HEK293 (cell line): ENCODE measurements at regions of chr19 and their contacts with region 1.

Region 1: GRCh38 chr19:38374429-38375176 is at the start of gene PSMD8:
- H3K4me3 ChIP-seq: peak within 1 kb of the TSS; percentile 70
- H3K27ac ChIP-seq: peak within 1 kb of the TSS; percentile 93
- H3K4me1 ChIP-seq: peaks cover 20% of the 10 kb centered on the region
- CTCF ChIP-seq: peak; percentile 97

Region 2: GRCh38 chr19:38122402-38123093 is 252.1 kb before region 1 on chr19:
- CTCF ChIA-PET with region 1: no interaction called
- POLR2A ChIA-PET with region 1: no interaction called
- H3K4me3 ChIP-seq: no peak overlapping the region
- H3K27ac ChIP-seq: no peak overlapping the region
- H3K4me1 ChIP-seq: no peaks in the 10 kb centered on the region
- CTCF ChIP-seq: no peak

Region 3: DNA sequence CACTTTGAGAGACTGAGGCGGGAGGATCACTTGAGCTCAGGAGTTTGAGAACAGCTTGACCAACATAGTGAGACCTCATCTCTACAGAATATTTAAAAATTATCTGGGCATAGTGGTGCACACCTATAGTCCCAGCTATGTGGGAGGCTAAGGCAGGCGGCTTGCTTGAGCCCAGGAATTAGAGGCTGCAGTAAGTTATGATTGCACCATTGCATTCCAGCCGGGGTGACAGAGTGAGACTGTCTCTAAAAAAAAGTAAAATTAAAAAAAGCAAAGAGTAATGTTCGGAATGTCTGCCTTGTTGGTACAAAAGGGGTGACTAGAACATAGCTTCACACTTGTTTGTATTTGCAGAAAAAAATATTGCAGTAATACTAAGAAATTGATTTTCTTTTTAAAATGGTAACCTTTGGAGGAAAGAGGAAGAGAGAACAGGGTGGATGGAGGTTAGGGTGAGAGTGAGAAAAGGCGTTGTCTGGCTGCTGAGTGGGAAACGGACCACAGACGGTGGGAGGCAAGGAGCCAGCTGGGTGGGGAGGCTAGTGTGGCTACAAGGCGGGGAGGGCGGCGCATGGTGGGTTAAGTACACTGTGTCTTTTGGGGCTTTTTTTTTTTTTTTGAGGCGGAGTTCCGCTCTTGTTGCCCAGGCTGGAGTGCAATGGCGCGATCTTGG is 128.6 kb before region 1 on chr19:
- CTCF ChIA-PET with region 1: interaction called, 33 read pairs
- POLR2A ChIA-PET with region 1: interaction called, 5 read pairs
- H3K4me3 ChIP-seq: no peak overlapping the region
- H3K27ac ChIP-seq: no peak overlapping the region
- H3K4me1 ChIP-seq: peaks cover 6% of the 10 kb centered on the region; the same call in 1 of the 2 replicates
- CTCF ChIP-seq: no peak

Region 4: GRCh38 chr19:38310986-38311385 is 63.6 kb before region 1 on chr19:
- CTCF ChIA-PET with region 1: no interaction called
- POLR2A ChIA-PET with region 1: interaction called, 10 read pairs
- H3K4me3 ChIP-seq: no peak overlapping the region
- H3K27ac ChIP-seq: no peak overlapping the region
- H3K4me1 ChIP-seq: peaks cover 4% of the 10 kb centered on the region; the same call in 1 of the 2 replicates
- CTCF ChIP-seq: no peak

Region 5: GRCh38 chr19:38361633-38362075 is 12.9 kb before region 1 on chr19:
- CTCF ChIA-PET with region 1: interaction called, 5 read pairs
- POLR2A ChIA-PET with region 1: interaction called, 49 read pairs
- H3K4me3 ChIP-seq: peak overlapping the region; percentile 55
- H3K27ac ChIP-seq: no peak overlapping the region
- H3K4me1 ChIP-seq: peaks cover 10% of the 10 kb centered on the region
- CTCF ChIP-seq: peak; percentile 86

Region 6: GRCh38 chr19:38551450-38551813 is 176.8 kb after region 1 on chr19:
- CTCF ChIA-PET with region 1: no interaction called
- POLR2A ChIA-PET with region 1: no interaction called
- H3K4me3 ChIP-seq: no peak overlapping the region
- H3K27ac ChIP-seq: no peak overlapping the region
- H3K4me1 ChIP-seq: peaks cover 10% of the 10 kb centered on the region
- CTCF ChIP-seq: no peak